HepG2 (cell line): ENCODE measurements at regions of chr17 and their contacts with region 1.

Region 1: DNA sequence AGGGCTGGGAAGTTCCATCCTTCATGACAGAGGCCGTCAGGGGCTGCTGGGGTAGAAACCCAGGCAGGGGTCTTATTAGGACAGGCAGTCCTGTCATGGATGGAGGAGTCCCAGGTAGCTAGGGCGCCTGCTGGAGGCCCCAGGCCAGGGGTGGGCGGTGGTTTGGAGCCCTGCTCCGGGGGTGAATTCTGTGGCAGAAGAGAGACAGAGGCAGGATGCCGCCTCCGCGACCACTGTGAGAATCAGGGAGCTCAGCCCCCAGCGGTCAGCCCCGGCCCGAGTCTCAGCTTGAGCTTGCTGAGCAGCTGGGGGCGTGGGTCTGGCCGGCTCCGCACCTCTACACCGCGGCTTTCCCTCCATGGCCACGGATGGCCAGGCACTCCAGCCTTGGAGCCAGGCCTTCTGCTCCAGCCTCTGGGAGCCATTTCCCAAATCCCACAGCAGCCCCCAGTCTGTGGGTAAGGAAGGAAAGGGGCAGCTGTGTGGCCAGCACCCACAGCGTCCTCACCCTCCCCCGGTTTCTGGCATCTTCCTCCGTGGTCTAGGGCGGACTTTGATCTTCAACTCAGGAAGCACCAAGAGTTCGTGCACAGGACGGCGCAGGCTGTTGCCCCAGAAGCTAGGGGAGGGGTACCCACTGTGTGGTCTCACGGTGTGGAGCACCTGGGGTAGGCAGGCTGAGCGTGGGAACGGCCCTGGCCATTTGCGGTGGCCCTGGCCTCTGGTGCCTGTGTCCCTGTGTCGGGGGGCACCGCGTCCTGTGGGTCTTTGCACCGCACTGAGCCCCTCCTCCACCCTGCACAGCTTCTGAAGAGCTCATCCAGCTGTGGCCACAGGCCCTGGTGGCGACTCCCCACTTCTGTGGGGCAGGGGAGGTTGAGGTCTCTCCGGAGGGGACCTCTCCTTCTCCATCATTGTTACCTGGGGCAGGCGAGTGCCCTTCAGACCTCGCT is 14.1 kb downstream of the CD7 start:
- DNase-seq: no peak
- ATAC-seq: peak; percentile 35
- H3K4me3 ChIP-seq: peak overlapping the region in 2 of 3 experiments; percentile 42 to 59; a peak in 3 of 6 replicates
- H3K27ac ChIP-seq: no peak overlapping the region
- H3K4me1 ChIP-seq: peaks cover 78% of the 10 kb centered on the region
- H3K27me3 ChIP-seq: no peaks in the 10 kb centered on the region
- CTCF ChIP-seq: no peak
- EP300 ChIP-seq: 0 out of 4 replicates have a peak, but pooled peaks of 1 of the 2 experiments have one; percentile 7
- POLR2A ChIP-seq: no peak
- RAD21 ChIP-seq: 0 out of 2 replicates have a peak, but pooled peaks have one; percentile 20

Region 2: DNA sequence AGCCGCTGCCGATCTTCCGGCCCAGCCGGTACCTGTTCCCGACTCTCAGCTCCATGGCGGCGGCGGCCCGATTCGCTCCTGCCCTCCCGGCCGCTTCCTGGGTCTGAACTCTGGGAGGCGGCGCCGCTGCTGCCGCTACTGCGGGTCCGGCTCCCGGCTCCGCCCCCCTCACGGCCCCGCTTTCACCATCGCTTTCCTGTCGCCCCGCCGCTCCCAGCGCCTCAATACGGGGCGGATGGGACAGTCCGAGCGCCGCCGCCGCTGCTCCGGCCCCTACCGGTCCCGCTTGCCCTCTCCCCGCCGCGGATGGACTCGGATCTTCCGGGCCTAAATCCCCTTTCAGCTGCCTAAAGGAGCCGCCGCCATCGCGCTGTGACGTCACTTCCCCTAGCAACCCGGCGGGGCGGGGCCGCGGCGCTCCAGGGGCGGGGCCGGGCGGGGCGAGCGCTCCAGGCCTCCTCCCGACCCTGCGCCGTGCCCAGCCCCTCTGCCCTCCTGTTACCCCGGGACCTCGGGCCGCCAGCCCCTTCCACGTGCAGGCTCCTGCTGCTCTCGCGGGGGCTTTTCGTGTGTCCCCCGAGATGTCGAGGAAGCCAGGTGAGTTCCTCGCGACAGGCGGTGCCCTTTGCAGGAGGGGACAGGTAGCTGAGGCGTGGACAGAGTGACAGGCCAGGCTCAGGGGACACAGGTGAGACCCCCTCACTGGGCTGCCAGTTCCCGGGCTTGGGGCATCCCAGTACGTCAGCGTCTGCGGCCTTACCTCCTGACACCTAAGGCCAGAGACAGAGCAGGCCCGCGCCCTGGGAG is 29.7 kb before region 1 on chr17 and contains the start of gene CSNK1D:
- CTCF ChIA-PET with region 1: no interaction called
- POLR2A ChIA-PET with region 1: interaction called, 46 read pairs
- in situ Hi-C with region 1: no loop called
- intact Hi-C with region 1: no loop called
- DNase-seq: peak; percentile 85
- ATAC-seq: peak; percentile 83
- H3K4me3 ChIP-seq: peak within 1 kb of the TSS; percentile 88 to 97 (median 88)
- H3K27ac ChIP-seq: peak within 1 kb of the TSS; percentile 92
- H3K4me1 ChIP-seq: peaks cover 75% of the 10 kb centered on the region
- H3K27me3 ChIP-seq: no peaks in the 10 kb centered on the region; a peak in 1 of 5 replicates
- CTCF ChIP-seq: no peak; the same call in none of the 2 replicates
- EP300 ChIP-seq: peak in 1 of 2 experiments; percentile 42; a peak in 2 of 4 replicates
- POLR2A ChIP-seq: peak; percentile 71 to 92
- RAD21 ChIP-seq: peak; percentile 77
- total RNA-seq, gene CSNK1D: 28.4 and 31.5 TPM in 2 replicates